ENCODE measurements at regions of chr12 and their contacts with region 1.

Region 1: DNA sequence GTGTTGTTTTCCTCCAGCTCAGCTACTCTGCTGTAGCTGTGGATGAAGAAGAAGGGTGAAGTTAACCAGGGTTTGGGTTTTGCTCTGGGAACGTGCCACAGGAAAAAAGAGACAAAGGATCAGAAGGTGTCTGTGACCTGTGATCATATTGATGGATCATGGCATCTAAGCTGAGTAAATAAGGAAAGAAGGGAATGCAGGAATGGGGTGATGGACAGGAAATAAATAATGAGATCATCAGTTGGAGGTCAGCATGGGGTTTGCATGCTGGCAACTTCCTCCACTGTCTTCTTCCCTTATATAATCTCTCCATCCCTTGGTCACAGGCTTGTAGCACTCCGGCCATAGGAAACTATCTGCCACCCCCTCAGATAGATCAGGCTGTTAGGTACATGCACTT is 430.3 kb upstream of the PDE3A start:
- DNase-seq: no peak
- H3K4me3 ChIP-seq: no peak overlapping the region
- H3K27ac ChIP-seq: no peak overlapping the region
- H3K4me1 ChIP-seq: no peaks in the 10 kb centered on the region
- H3K27me3 ChIP-seq: no peaks in the 10 kb centered on the region
- CTCF ChIP-seq: no peak
- POLR2A ChIP-seq: no peak

Region 2: DNA sequence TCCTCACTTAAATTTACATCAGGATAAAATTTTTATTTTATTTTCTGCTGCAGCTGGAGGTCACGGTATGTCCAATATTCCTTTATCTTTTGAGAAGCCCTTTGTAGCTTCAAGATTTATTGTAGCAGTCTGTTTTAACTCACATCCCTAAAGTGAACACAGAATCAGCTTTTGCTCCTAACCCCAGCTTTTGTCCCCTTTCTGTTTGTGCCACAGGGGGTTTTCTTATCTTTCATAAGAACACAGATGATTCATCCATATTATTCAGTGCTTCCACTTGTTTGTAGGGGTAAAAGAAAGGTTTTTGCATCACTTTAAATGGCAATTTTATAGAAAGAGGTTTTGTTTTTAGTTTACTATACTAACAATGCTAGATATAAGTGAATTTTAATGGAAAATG is 1698.5 kb before region 1 on chr12:
- intact Hi-C with region 1: loop called (anchors 10 kb)
- DNase-seq: no peak
- H3K4me3 ChIP-seq: no peak overlapping the region
- H3K27ac ChIP-seq: no peak overlapping the region
- H3K4me1 ChIP-seq: no peaks in the 10 kb centered on the region
- H3K27me3 ChIP-seq: no peaks in the 10 kb centered on the region
- CTCF ChIP-seq: no peak
- POLR2A ChIP-seq: no peak

Measured in uterus (tissue), 4 donors.